ENCODE measurements at regions of chr6 and their contacts with region 1.

Region 1: DNA sequence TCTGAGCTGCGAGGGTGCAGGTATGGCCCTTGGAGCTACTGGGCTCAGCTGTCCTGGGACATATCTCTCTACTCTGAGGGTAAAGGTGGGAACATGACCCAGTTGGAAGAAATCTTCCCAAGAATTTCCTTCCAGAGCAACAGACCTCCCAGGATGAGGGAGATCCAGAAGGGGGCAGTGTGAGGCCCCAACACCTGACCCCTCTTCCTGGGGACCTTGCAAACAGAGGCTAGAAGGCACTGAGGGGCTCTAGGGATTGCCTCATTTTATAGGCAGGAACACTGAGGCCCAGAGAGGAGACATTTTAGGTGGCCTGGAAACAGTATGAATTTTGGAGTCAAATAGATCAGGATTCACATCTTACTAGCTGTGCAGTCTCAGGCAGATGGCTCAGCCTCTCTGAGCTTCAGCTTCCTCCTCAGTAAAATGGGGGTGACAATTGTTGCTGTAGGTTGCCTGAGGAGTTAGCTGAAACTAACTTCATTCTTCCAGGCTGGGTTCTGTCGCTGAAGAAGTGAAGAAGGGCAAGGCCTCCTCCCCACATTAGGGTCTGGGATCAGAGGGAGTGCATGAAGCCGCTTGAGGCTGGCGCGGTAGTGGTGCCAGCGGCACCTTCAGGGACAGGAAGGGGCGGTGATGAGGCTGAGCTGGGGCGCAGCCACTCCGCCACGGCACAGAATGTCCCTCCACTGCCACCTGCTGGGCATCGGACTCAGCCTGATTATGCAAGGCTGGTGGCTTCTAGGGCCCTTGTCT is 11.4 kb downstream of the KCNK17 start:
- DNase-seq: peak; percentile 66
- ATAC-seq: peak; percentile 98
- H3K4me3 Mint-ChIP-seq: peak overlapping the region; percentile 58
- H3K27ac Mint-ChIP-seq: no peak overlapping the region
- H3K4me1 Mint-ChIP-seq: peaks cover 5% of the 10 kb centered on the region
- H3K27me3 Mint-ChIP-seq: peaks cover 19% of the 10 kb centered on the region
- CTCF ChIP-seq: no peak

Region 2: DNA sequence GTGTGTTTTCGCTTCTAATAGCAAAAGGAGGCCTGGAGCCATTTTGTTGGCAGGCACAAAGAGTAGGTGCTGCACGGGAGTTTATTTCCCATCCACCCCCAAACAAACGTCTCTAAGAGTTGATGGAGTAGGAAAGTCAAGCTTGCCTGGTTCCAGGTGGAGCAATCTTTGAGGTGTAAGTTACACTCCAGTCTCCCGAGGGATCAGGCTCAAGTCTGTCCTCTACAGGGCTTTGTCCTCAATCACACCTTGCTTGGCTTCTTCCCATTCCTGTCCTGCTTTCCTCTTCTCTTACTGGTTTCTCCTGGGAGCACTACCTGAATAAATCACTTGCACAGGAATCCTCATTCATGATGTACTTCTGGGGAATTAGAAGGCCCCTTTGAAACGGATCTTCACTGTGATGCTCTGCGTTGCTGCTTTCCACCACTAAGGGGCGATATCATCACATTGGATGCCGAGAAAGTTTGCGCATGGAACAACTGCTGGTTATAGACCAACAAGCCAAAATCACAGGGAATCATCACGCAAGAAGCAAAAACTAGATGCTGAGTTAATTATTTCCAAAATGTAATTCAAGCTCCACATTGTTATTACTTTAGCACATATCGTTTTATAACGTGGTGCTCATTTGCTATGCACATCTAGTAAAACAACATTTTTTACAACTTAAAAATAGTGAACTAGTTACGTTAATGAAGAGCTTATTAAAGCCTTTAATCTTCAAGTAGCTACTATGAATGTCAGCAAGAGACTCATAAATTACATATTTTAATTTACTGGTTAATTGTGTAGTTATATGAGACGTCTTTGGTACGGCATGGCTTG is 430.9 kb before region 1 on chr6:
- CTCF ChIA-PET with region 1: interaction called, 22 read pairs
- POLR2A ChIA-PET with region 1: no interaction called
- intact Hi-C with region 1: loop called (anchors 1 kb)
- DNase-seq: no peak
- ATAC-seq: peak; percentile 42
- H3K4me3 Mint-ChIP-seq: no peak overlapping the region
- H3K27ac Mint-ChIP-seq: no peak overlapping the region
- H3K4me1 Mint-ChIP-seq: peaks cover 3% of the 10 kb centered on the region
- H3K27me3 Mint-ChIP-seq: no peaks in the 10 kb centered on the region
- CTCF ChIP-seq: peak; percentile 79

Region 3: DNA sequence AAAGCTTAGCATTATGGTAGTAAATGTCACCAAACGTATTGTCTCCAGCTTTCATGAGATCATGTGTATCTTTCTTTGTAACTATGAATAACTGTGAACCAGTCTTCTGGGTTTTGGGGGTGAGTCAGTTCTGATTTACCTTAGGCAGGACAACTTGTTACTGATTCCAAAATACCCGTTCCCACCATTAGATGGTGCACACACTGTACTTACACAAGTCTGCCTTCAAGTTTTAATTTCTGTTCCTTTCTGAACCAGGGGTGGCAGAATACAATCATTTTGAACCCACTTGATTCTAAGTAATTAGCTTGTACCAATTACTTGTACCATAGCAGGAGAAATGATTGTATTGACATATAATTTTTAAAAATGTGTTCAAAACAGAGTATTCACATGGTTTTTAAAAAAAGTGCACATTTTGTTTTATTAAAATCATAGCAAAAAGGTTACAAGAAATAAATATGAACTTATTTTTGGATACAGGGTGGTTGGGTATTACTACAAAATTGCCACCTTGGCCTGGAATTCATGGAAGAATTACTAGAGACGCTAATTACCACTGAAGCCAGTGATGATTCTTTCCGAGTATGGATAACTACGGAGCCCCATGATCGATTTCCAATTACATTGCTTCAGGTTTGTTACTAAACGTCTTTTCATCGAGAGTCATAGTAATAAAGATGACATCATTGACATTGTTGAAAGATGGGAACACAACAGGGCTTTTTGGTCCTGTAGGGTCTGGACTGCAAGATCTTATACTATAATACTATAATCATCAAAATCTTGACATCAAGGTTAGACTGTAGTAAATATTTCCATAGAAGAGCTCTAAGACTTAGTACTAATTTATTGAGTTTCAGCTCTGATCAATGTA is 329.4 kb before region 1 on chr6:
- CTCF ChIA-PET with region 1: interaction called, 24 read pairs
- POLR2A ChIA-PET with region 1: no interaction called
- intact Hi-C with region 1: loop called (anchors 1 kb)
- DNase-seq: no peak
- ATAC-seq: peak; percentile 37
- H3K4me3 Mint-ChIP-seq: no peak overlapping the region
- H3K27ac Mint-ChIP-seq: no peak overlapping the region
- H3K4me1 Mint-ChIP-seq: no peaks in the 10 kb centered on the region
- H3K27me3 Mint-ChIP-seq: peaks cover 4% of the 10 kb centered on the region
- CTCF ChIP-seq: no peak

Region 4: GRCh38 chr6:38997128-38997761 is 305.6 kb before region 1 on chr6:
- CTCF ChIA-PET with region 1: interaction called, 47 read pairs
- POLR2A ChIA-PET with region 1: no interaction called
- intact Hi-C with region 1: loop called (anchors 1 kb)
- DNase-seq: peak; percentile 18
- ATAC-seq: no peak
- H3K4me3 Mint-ChIP-seq: no peak overlapping the region
- H3K27ac Mint-ChIP-seq: no peak overlapping the region
- H3K4me1 Mint-ChIP-seq: no peaks in the 10 kb centered on the region
- H3K27me3 Mint-ChIP-seq: peaks cover 12% of the 10 kb centered on the region
- CTCF ChIP-seq: no peak

Region 5: DNA sequence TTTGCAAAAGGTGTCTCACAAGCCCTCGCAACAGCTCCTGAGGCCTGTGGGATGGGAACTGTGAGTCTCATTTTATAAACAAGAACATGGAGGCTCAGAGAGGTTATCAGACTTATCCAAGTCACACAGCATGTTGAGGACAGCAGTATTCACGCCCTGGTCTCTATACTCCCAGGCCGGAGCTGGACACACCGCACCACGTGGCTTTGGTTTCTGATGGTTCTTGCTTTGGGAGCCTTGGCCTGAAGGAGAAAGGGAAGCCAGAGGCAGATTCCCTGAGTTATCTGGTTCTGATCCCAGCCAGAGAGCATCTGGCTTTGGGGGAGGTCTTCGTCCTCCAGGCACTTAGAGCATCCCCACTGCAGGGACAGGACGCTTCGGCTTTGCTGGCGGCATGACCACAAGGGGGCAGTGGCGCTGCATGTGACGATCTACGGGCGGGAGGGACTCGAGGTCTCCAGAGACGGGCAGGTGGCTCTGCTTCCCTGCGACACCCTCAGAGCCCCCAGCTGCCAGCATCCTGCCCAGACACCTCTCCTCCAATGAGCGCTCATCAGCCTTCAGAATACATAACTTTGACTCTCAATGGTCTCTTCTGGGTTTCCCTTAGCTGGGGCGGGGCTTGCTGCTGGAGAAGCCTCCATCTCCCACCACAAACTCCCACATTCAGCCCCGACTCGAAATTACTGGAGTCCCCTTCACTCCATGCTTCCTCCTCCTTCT is 136.5 kb before region 1 on chr6:
- CTCF ChIA-PET with region 1: interaction called, 113 read pairs
- POLR2A ChIA-PET with region 1: interaction called, 5 read pairs
- intact Hi-C with region 1: loop called (anchors 1 kb)
- DNase-seq: peak; percentile 70
- ATAC-seq: peak; percentile 75
- H3K4me3 Mint-ChIP-seq: no peak overlapping the region
- H3K27ac Mint-ChIP-seq: no peak overlapping the region
- H3K4me1 Mint-ChIP-seq: peaks cover 5% of the 10 kb centered on the region
- H3K27me3 Mint-ChIP-seq: peaks cover 15% of the 10 kb centered on the region
- CTCF ChIP-seq: peak; percentile 46

Measured in activated B cell treated with CpG ODN at 0.5 μM for 24 hours (primary cell).